ENCODE measurements at regions of chr3 and their contacts with region 1.

Region 1: GRCh38 chr3:45760878-45761711 is 35.2 kb downstream of the SLC6A20 start:
- DNase-seq: peak; percentile 88
- CTCF ChIP-seq: peak; percentile 80

Region 2: DNA sequence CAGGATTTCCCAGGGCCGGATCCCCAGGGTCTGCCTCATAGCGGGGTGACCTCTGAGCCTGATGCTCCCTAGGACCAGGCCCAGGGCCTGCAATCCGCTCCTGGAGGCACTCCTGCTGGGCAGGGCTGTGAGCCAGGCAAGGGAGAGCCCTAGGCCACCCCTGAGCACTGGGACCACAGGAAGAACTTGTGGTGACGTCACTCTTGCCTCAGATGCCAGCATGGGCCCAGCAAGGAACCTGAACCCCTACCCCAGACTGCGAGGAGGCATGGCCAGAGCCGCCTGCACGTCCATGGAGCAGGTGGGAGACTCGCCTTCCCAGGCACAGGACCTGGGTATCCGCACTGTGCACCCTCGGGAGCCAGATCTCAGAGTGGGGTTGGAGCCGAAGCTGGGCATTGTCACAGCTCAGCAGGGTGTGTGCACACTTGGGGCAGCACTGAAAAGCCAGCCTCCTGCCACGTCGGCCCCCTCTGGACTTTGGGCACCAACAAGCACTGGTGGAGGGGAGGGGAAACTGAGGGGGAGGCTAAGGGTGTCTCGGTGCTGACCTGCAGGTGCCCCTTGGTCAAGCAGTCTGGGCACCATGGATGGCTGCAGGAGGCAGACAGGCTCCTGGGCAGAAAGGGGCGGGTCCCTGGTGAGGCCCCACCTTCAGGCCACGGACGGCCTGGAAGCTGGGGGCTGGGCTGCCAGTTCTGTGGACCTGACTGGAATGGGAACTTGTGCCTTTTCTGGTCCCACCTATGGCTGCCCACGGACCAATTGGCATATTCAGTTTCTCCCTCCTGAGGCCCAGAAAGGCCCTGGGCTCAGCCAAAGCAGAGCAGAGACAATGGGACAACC is 14.1 kb before region 1 on chr3:
- CTCF ChIA-PET with region 1: interaction called, 19 read pairs
- POLR2A ChIA-PET with region 1: no interaction called
- DNase-seq: no peak
- CTCF ChIP-seq: no peak

Region 3: GRCh38 chr3:45790596-45790995 is 29.5 kb after region 1 on chr3:
- CTCF ChIA-PET with region 1: interaction called, 10 read pairs
- POLR2A ChIA-PET with region 1: no interaction called
- DNase-seq: no peak
- CTCF ChIP-seq: no peak

Region 4: DNA sequence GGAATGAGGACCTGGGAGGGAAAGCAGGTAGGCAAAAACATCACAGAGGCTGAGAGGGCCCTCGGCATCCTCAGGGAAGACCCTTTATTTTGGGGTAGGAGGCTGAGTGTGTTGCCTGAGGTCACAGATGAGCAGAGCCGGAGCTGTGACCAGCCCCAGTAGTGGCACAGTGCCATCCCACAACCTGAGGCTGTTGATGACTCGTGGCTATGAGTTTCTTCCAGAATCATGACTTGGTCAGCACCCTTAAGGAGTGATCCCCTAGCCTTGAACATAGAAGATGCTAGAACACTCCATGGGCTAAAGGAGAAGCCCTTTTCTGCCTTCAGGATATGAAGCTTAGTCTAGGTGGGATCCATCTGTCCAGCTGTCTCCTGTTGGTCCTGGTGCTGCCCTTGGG is 162.7 kb after region 1 on chr3:
- CTCF ChIA-PET with region 1: interaction called, 155 read pairs
- POLR2A ChIA-PET with region 1: no interaction called
- DNase-seq: no peak
- CTCF ChIP-seq: no peak

Measured in GM10248 (cell line).